Activated B cell treated with CpG ODN at 0.5 μM for 24 hours (primary cell): ENCODE measurements at regions of chr2 and their contacts with region 1.

Region 1: GRCh38 chr2:37389989-37390765 is 45.7 kb downstream of the QPCT start:
- DNase-seq: peak; percentile 41
- ATAC-seq: peak; percentile 92
- H3K4me3 Mint-ChIP-seq: peak overlapping the region; percentile 71
- H3K27ac Mint-ChIP-seq: no peak overlapping the region
- H3K4me1 Mint-ChIP-seq: peaks cover 3% of the 10 kb centered on the region
- H3K27me3 Mint-ChIP-seq: no peaks in the 10 kb centered on the region
- CTCF ChIP-seq: no peak

Region 2: DNA sequence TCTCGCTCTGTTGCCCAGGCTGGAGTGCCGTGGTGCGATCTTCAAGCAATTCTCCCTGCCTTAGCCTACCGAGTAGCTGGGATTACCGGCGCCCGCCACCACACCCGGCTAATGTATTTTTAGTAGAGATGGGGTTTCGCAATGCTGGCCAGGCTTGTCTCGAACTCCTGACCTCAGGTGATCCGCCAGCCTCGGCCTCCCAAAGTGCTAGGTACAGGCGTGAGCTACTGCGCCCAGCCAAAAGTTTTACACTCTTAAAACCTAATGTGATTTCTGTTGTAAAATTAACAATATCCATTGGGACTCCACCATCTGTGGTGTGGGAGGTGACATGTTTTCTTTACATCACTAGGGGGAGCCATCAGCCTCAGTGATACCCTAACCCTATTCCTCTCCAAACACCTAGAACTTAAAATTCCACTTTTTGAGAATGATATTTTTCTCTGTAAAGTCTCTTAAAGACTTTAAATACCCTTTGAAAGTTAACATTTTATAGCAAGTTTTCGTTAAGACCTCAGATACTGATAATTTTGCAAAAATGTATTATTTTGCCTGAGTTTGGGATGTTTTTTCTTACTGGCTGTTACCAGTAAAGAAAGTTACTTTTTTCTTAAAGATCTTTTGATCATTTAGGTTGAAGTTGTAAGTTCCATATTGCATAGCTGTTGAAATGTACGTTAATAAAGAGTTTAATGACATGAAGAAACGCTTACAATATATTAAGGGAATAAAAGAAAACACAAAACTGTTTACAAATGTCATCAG is 221.8 kb before region 1 on chr2:
- CTCF ChIA-PET with region 1: no interaction called
- POLR2A ChIA-PET with region 1: no interaction called
- intact Hi-C with region 1: loop called (anchors 5 kb)
- DNase-seq: no peak
- ATAC-seq: peak; percentile 86
- H3K4me3 Mint-ChIP-seq: no peak overlapping the region
- H3K27ac Mint-ChIP-seq: no peak overlapping the region
- H3K4me1 Mint-ChIP-seq: no peaks in the 10 kb centered on the region
- H3K27me3 Mint-ChIP-seq: no peaks in the 10 kb centered on the region
- CTCF ChIP-seq: no peak

Region 3: DNA sequence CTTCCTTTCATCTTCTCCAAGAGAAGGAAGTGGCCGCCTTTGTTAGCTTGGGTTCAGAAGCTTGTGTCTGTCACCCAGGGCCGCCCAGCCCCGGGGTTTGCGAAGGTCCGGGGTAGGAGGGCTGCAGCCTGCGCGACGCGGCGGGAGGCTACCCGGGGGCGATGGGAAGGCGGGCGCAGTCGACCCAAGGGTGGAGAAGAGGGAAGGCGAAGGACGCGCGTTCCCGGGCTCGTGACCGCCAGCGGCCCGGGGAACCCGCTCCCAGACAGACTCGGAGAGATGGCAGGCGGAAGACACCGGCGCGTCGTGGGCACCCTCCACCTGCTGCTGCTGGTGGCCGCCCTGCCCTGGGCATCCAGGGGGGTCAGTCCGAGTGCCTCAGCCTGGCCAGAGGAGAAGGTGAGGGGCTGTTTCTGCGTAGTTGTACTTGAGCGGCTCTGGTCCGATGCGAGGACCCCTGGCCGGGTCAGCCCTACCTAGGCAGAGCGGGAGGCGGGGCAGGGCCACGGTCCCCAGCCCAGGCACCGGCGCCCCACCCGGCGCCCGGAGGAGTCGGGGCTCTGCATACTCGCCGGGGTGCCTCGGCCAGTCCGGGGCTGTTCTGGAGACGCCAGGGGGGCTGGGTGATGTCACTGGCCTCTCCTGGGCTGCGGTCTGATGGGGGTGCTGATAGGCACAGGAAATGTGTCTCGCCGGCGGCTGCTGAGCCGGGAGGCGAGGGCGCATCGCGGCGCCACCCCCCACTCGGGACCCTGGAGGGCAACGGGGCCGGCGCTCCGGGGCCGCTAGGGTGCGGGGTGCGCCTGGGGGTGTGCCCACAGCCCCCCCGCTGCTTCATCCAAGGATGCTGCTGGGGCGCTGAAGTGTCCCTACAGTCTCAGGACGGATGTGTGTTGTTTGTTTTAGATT is 45.5 kb before region 1 on chr2 and contains the start of gene QPCT:
- CTCF ChIA-PET with region 1: interaction called, 12 read pairs
- POLR2A ChIA-PET with region 1: interaction called, 27 read pairs
- intact Hi-C with region 1: loop called (anchors 2 kb)
- DNase-seq: peak; percentile 53
- ATAC-seq: peak; percentile 75
- H3K4me3 Mint-ChIP-seq: peak within 1 kb of the TSS; percentile 85
- H3K27ac Mint-ChIP-seq: peak within 1 kb of the TSS; percentile 30
- H3K4me1 Mint-ChIP-seq: peaks cover 21% of the 10 kb centered on the region
- H3K27me3 Mint-ChIP-seq: no peaks in the 10 kb centered on the region
- CTCF ChIP-seq: no peak
- total RNA-seq, gene QPCT: 1.9 and 2.1 TPM in 2 replicates

Region 4: DNA sequence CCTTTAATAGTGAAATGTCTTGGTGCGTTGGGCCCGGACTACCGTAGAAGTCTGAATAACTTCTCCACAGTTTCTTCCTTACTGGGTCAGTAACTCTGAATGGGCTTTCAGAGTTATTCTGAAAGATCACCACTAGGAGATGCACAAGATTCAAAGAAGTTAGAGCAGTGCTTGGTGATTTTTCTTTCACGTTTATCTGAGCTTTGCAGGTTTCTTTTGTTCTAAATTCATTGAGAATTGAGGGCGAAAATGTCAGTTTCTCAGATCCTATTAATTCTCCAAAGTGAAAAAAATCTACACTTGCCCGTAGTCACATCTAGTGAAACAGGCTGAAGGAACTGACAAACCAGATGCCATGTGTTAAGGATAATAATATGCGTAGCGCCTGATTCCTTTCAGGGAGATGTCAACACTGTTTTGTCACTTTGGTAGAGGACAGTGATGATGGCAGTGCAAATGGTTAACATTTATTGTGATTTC is 24.3 kb after region 1 on chr2:
- CTCF ChIA-PET with region 1: interaction called, 49 read pairs
- POLR2A ChIA-PET with region 1: interaction called, 4 read pairs
- intact Hi-C with region 1: no loop called
- DNase-seq: no peak
- ATAC-seq: peak; percentile 61
- H3K4me3 Mint-ChIP-seq: no peak overlapping the region
- H3K27ac Mint-ChIP-seq: no peak overlapping the region
- H3K4me1 Mint-ChIP-seq: peaks cover 6% of the 10 kb centered on the region
- H3K27me3 Mint-ChIP-seq: no peaks in the 10 kb centered on the region
- CTCF ChIP-seq: peak; percentile 60

Region 5: GRCh38 chr2:37832590-37833197 is 442.5 kb after region 1 on chr2:
- CTCF ChIA-PET with region 1: interaction called, 156 read pairs
- POLR2A ChIA-PET with region 1: no interaction called
- intact Hi-C with region 1: no loop called
- DNase-seq: peak; percentile 61
- ATAC-seq: peak; percentile 96
- H3K4me3 Mint-ChIP-seq: no peak overlapping the region
- H3K27ac Mint-ChIP-seq: no peak overlapping the region
- H3K4me1 Mint-ChIP-seq: peaks cover 1% of the 10 kb centered on the region
- H3K27me3 Mint-ChIP-seq: no peaks in the 10 kb centered on the region
- CTCF ChIP-seq: peak; percentile 55

Region 6: DNA sequence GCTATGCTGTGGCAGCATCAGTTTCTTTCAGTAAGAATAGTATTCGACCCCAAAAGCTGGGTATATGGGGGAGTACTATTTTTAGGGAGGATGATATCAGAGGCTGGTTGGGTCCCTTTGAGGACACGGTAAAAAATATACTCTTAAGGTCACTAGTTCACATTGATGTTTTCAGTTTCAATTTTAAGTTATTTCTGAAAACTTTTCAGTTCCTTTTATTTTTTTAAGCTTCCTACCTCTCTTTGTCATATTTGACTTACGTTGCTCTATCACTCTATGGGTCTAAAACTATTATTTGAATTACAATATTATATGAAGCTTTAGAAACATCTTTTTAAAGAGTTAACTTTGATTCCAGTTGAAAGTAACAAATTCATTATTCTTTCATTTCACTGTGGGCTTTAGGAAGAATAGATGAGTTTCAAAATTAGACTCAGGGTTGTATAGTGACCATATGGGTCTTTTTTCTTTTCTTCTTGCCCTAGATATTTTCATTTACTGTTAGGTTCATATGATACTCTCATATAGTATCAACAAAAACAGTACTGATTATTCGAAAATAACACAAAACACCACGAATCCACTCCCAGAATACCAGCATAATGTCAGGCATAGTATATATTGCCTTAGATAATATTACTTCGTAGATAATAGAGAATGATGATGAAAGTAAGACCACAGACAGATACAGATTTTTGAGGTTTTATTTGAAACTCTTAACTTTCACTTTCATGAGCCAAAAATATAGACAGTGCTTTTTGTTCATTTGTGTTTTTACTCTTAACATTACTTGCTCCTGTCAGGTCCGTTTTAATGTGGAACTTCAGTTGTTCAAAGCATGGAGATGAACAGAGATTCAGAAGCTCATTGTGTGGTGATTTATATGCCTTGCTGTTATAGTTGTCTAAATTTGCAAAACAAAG is 544.7 kb after region 1 on chr2:
- CTCF ChIA-PET with region 1: no interaction called
- POLR2A ChIA-PET with region 1: no interaction called
- intact Hi-C with region 1: loop called (anchors 2 kb)
- DNase-seq: no peak
- ATAC-seq: peak; percentile 81
- H3K4me3 Mint-ChIP-seq: peak overlapping the region; percentile 74
- H3K27ac Mint-ChIP-seq: peak overlapping the region; percentile 87
- H3K4me1 Mint-ChIP-seq: peaks cover 77% of the 10 kb centered on the region
- H3K27me3 Mint-ChIP-seq: no peaks in the 10 kb centered on the region
- CTCF ChIP-seq: no peak